IMR-90 (cell line): ENCODE measurements at regions of chr17 and their contacts with region 1.

Region 1: DNA sequence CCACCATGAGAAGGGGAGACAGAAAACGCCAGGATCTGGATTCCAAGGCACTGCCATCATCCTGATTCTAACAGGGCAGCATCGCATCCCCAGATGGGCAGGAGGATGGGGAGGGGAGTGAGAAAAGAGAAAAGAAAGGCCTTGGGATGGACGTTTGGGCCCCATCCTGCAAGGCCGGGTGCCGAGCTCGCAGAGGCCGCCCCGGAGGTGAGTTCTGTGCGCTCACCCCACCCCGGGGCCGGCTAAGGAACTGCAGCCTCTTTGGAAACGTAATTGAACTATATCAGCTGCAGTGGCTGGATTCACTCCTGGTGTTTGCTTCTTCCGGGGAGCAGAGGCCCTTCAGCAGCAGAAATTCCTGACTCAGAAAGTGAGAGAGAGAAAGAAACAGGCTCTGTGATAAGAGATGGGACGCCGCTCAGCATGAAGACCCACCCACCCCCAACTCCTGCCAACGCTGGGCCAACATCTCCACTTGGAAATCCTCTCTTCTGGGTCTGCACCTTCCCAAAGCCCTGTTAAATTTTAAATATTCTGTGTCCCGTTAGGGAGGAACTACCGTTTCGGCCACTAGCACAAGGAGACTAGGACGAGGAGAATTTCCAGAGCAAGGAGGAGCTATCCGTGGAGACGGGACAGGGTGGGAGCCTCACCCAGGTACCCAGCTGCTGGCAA is 8.5 kb upstream of the SSTR2 start:
- DNase-seq: peak; percentile 68
- ATAC-seq: peak; percentile 100
- H3K4me3 ChIP-seq: no peak overlapping the region
- H3K27ac ChIP-seq: no peak overlapping the region
- H3K4me1 ChIP-seq: peaks cover 3% of the 10 kb centered on the region; the same call in 1 of the 2 replicates
- H3K27me3 ChIP-seq: peaks cover 18% of the 10 kb centered on the region
- CTCF ChIP-seq: peak; percentile 81
- POLR2A ChIP-seq: no peak
- RAD21 ChIP-seq: peak; percentile 79

Region 2: GRCh38 chr17:73092523-73093135 is 63.7 kb before region 1 on chr17 and contains the start of gene SLC39A11:
- CTCF ChIA-PET with region 1: no interaction called
- POLR2A ChIA-PET with region 1: no interaction called
- dilution Hi-C with region 1: no loop called
- in situ Hi-C with region 1: no loop called
- intact Hi-C with region 1: no loop called
- DNase-seq: peak; percentile 91
- ATAC-seq: peak; percentile 98
- H3K4me3 ChIP-seq: peak within 1 kb of the TSS; percentile 77
- H3K27ac ChIP-seq: peak within 1 kb of the TSS; percentile 63
- H3K4me1 ChIP-seq: peaks cover 3% of the 10 kb centered on the region
- H3K27me3 ChIP-seq: 0 out of 2 replicates have a peak, but pooled peaks cover 2% of the 10 kb centered on the region
- CTCF ChIP-seq: no peak
- POLR2A ChIP-seq: peak; percentile 56
- RAD21 ChIP-seq: no peak
- total RNA-seq, gene SLC39A11: 12.5 and 14.3 TPM in 2 replicates

Region 3: GRCh38 chr17:73123606-73124320 is 32.5 kb before region 1 on chr17:
- CTCF ChIA-PET with region 1: no interaction called
- POLR2A ChIA-PET with region 1: no interaction called
- dilution Hi-C with region 1: no loop called
- in situ Hi-C with region 1: no loop called
- intact Hi-C with region 1: loop called (anchors 2 kb)
- DNase-seq: no peak
- ATAC-seq: no peak
- H3K4me3 ChIP-seq: no peak overlapping the region
- H3K27ac ChIP-seq: no peak overlapping the region
- H3K4me1 ChIP-seq: no peaks in the 10 kb centered on the region
- H3K27me3 ChIP-seq: no peaks in the 10 kb centered on the region; the same call in 1 of the 2 replicates
- CTCF ChIP-seq: no peak
- POLR2A ChIP-seq: no peak
- RAD21 ChIP-seq: no peak